MCF 10A (cell line): ENCODE measurements at regions of chr5 and their contacts with region 1.

Region 1: DNA sequence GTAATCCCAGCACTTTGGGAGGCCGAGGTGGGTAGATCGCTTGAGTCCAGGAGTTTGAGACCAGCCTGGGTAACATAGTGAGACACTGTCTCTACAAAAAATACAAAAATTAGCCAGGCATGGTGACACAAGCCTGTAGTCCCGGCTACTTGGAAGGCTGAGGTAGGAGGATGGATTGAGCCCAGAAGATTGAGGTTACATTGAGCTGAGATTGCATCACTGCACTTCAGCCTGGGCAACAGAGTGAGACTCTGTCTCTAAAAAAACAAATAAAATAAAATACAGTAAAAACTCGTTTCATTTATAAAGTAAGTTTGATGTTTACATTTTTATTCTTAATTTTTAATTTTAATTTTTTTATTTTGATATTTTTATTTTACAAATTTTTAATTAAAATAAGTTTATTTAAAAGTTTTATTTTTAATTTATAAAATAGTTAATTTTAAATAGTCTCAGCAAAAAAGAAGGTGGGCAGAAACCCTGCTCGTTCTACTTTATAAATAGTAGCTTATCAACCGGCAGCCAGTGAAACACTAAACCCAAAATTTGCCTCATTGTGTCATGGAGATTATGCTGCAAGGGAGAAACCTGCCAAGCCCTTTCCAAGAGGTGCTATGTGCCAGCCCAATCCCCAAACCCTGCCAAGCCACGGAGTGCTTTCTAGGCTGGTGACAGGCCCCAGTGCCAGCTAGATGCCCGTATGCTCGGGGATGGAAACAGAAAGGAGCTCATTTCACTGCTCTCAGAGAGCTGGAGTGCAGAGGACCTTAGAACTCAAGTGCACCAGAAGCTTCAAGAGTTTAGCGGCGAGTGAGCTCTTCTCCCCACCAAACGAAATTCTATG is 38.9 kb downstream of the SERINC5 start:
- DNase-seq: no peak
- H3K4me3 Mint-ChIP-seq: no peak overlapping the region
- H3K27ac Mint-ChIP-seq: no peak overlapping the region
- H3K4me1 Mint-ChIP-seq: peaks cover 20% of the 10 kb centered on the region
- H3K27me3 Mint-ChIP-seq: no peaks in the 10 kb centered on the region
- CTCF ChIP-seq: no peak

Region 2: DNA sequence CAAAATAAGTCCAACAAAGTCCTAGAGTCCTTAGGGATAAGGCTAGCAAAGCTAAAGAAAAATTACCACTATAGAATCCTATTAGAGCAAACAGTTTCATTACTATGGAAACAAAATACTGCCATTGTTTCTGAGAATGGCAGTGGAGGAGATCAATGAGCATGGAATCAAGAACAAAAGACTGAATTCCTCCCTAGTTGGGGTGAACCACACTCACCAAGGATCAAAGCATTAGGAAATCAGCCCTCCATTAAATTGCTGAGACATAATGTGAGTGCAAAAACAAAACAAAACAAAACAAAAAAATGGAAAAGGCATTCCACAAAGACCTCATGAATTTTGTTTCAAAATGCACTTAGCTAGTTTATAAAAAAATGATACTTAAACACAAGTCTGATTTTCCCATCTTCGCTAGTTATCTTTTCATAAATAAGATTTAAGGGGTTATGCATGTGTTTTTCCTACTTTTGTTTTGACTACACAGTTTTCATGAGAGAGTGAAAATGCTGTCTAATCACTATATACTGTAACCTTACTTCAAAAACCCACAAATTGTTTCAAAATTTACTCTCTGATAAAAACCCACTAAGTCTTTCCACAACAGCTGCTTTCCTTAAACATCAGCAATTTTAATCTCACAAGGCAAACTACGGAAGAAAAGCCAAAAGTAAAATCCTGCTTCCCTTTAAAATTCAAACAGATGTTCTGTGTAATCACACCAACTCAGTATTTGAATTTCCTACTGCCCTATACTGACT is 29.2 kb after region 1 on chr5:
- CTCF ChIA-PET with region 1: interaction called, 7 read pairs
- POLR2A ChIA-PET with region 1: interaction called, 3 read pairs
- intact Hi-C with region 1: loop called (anchors 1 kb)
- DNase-seq: no peak
- H3K4me3 Mint-ChIP-seq: peak overlapping the region; percentile 69
- H3K27ac Mint-ChIP-seq: peak overlapping the region; percentile 90
- H3K4me1 Mint-ChIP-seq: peaks cover 17% of the 10 kb centered on the region
- H3K27me3 Mint-ChIP-seq: no peaks in the 10 kb centered on the region
- CTCF ChIP-seq: no peak

Region 3: DNA sequence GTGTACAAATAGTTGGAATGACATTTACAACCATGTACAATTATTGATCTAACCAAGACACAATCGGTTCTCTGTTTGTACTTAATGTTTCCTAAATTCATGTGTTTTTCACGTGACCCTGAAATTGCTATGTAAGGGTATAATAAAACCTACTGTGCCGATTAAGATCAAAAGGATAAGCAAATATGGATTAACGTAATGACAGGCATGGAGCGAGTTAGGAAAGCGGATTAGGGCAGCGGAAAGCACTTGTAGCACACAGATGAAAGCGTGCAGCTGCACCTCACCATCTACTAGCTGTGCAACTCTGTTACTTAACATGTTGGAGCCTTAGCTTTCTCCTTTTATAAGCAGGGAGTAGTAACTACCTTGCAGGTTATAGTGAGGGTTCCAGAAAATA is 152.5 kb after region 1 on chr5:
- CTCF ChIA-PET with region 1: no interaction called
- POLR2A ChIA-PET with region 1: no interaction called
- intact Hi-C with region 1: no loop called
- DNase-seq: no peak
- H3K4me3 Mint-ChIP-seq: no peak overlapping the region
- H3K27ac Mint-ChIP-seq: no peak overlapping the region
- H3K4me1 Mint-ChIP-seq: no peaks in the 10 kb centered on the region
- H3K27me3 Mint-ChIP-seq: no peaks in the 10 kb centered on the region
- CTCF ChIP-seq: no peak

Region 4: GRCh38 chr5:81045389-81045807 is 828.4 kb after region 1 on chr5:
- CTCF ChIA-PET with region 1: no interaction called
- POLR2A ChIA-PET with region 1: no interaction called
- intact Hi-C with region 1: no loop called
- DNase-seq: no peak
- H3K4me3 Mint-ChIP-seq: no peak overlapping the region
- H3K27ac Mint-ChIP-seq: no peak overlapping the region
- H3K4me1 Mint-ChIP-seq: no peaks in the 10 kb centered on the region
- H3K27me3 Mint-ChIP-seq: peaks cover 42% of the 10 kb centered on the region
- CTCF ChIP-seq: no peak